Spleen (tissue), 13 donors: ENCODE measurements at regions of chr5 and their contacts with region 1.

Region 1: GRCh38 chr5:10761166-10761932 is at the start of gene DAP:
- DNase-seq: peak; percentile 97
- H3K4me3 ChIP-seq: peak within 1 kb of the TSS; percentile 59 to 93 (median 74)
- H3K27ac ChIP-seq: peak within 1 kb of the TSS; percentile 83 to 99 (median 98)
- H3K4me1 ChIP-seq: peaks cover 14 to 62% (median 47%) of the 10 kb centered on the region in 6 donors
- H3K27me3 ChIP-seq: no peaks in the 10 kb centered on the region
- CTCF ChIP-seq: peak in 1 of 11 experiments; percentile 17
- POLR2A ChIP-seq: no peak
- total RNA-seq, gene DAP: 57.7 to 111 (median 71.1) TPM

Region 2: GRCh38 chr5:10353241-10354047 is 407.9 kb before region 1 on chr5 and contains the start of gene MARCHF6:
- intact Hi-C with region 1: loop called (anchors 5 kb)
- DNase-seq: peak; percentile 98
- H3K4me3 ChIP-seq: peak within 1 kb of the TSS; percentile 65 to 95 (median 84)
- H3K27ac ChIP-seq: peak within 1 kb of the TSS; percentile 97 to 100 (median 98)
- H3K4me1 ChIP-seq: peaks cover 12 to 58% (median 45%) of the 10 kb centered on the region in 6 donors
- H3K27me3 ChIP-seq: no peaks in the 10 kb centered on the region
- CTCF ChIP-seq: peak in 3 of 11 experiments; percentile 12 to 22 (median 22)
- POLR2A ChIP-seq: peak in 2 of 3 donors; percentile 78 to 84
- total RNA-seq, gene MARCHF6: 104 to 168 (median 123) TPM

Region 3: GRCh38 chr5:10432059-10433008 is 329.0 kb before region 1 on chr5:
- intact Hi-C with region 1: loop called (anchors 10 kb)
- DNase-seq: no peak
- H3K4me3 ChIP-seq: no peak overlapping the region
- H3K27ac ChIP-seq: no peak overlapping the region
- H3K4me1 ChIP-seq: no peaks in the 10 kb centered on the region
- H3K27me3 ChIP-seq: no peaks in the 10 kb centered on the region
- CTCF ChIP-seq: no peak
- POLR2A ChIP-seq: no peak

Region 4: GRCh38 chr5:11075035-11075805 is 313.9 kb after region 1 on chr5:
- intact Hi-C with region 1: no loop called
- DNase-seq: no peak
- H3K4me3 ChIP-seq: no peak overlapping the region
- H3K27ac ChIP-seq: no peak overlapping the region
- H3K4me1 ChIP-seq: no peaks in the 10 kb centered on the region
- H3K27me3 ChIP-seq: peaks cover 0 to 8% (median 0%) of the 10 kb centered on the region in 7 donors
- CTCF ChIP-seq: no peak
- POLR2A ChIP-seq: no peak